ENCODE measurements at regions of chr21 and their contacts with region 1.

Region 1: DNA sequence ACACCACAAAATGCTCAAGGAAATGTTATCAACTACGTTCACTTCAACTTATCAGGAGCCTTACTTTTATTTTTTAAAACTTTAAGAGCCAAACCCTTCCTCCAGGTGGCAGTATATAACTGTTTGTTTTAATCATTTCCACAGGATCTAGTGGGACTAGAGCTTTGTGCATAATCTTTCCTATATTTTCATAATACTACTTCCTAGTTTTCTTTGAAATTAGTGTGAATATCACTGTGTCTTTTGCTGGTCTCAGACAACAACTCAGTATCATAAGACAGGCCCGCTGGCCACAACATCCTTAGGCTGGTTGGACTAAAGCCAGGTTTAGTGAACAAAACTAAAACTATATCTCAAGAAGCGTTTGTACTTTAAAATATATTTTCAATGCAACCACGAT is 145.5 kb downstream of the TIAM1 start:
- DNase-seq: no peak
- H3K4me3 Mint-ChIP-seq: no peak overlapping the region
- H3K27ac Mint-ChIP-seq: no peak overlapping the region
- H3K4me1 Mint-ChIP-seq: peaks cover 39% of the 10 kb centered on the region
- H3K27me3 Mint-ChIP-seq: no peaks in the 10 kb centered on the region

Region 2: DNA sequence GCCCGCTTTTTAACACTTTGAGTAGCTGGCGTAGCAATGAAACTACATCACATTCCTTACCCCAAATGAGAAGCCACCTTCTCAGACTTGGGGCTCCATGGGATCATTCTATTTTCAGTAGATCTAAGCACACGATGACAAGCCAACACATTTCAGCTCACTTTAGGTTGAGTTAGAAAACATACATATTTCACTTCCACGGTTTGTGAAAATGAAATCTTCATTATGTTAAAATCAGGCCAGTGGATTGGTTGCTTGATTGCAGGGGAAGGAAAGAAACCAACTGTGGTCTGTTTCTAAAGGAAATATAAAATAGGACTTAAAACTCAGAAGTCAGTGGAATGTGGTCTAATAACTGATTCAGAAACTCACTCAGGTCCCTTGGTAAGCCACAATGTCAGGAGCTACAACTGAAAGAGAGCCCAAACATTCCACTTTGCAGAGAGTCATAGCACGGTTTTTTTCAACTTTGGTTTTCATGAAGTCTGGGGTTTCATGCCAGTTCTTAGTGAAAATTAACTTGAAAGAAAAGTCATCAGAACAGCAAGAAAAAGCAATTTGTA is 227.7 kb after region 1 on chr21:
- intact Hi-C with region 1: loop called (anchors 1 kb)
- DNase-seq: no peak
- H3K4me3 Mint-ChIP-seq: no peak overlapping the region
- H3K27ac Mint-ChIP-seq: no peak overlapping the region
- H3K4me1 Mint-ChIP-seq: peaks cover 13% of the 10 kb centered on the region
- H3K27me3 Mint-ChIP-seq: peaks cover 1% of the 10 kb centered on the region

Region 3: GRCh38 chr21:31580866-31581276 is 382.3 kb after region 1 on chr21:
- intact Hi-C with region 1: loop called (anchors 1 kb)
- DNase-seq: peak; percentile 56
- H3K4me3 Mint-ChIP-seq: no peak overlapping the region
- H3K27ac Mint-ChIP-seq: no peak overlapping the region
- H3K4me1 Mint-ChIP-seq: no peaks in the 10 kb centered on the region
- H3K27me3 Mint-ChIP-seq: peaks cover 28% of the 10 kb centered on the region

Region 4: DNA sequence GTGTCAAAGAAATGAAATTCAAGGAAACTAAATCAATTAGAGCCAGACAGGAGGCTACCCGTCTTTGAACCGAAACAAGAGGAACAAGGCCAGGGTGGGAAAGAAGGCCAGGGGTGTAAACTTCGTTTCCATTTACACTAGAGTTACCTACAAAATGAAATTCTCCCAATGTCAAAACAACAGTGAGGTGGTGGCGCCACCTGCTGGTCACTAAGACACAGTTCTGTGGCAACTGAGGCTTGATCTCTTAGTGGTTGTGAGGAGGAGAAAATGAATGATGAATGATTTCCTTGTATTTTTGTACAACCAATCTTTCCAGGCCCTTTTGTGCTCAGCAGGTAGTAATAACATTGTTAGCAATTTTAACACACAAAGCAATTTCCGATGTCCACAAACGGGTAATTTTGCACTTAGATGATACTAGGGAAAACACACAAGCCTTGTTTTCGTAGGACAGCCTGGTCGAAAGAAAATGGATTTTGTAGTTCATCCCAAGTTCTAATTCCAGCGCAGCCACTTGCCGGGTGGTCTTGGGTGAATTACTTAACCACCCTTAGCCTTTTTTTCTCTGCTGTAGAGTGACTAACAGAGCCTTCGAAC is 406.1 kb after region 1 on chr21:
- intact Hi-C with region 1: loop called (anchors 1 kb)
- DNase-seq: peak; percentile 43
- H3K4me3 Mint-ChIP-seq: no peak overlapping the region
- H3K27ac Mint-ChIP-seq: no peak overlapping the region
- H3K4me1 Mint-ChIP-seq: no peaks in the 10 kb centered on the region
- H3K27me3 Mint-ChIP-seq: peaks cover 2% of the 10 kb centered on the region

Measured in activated T-helper 2 cell treated with anti-CD3 and anti-CD28 coated beads, Interferon-gamma antibody, Interleukin-2, Interleukin-4, amounts not matched to agents 10 μg/mL and 5 μg/mL and 100 μg/mL, durations not matched to agents 14 hours and 24 hours and 36 hours (primary cell).